Mammary epithelial cell (primary cell): ENCODE measurements at regions of chr20 and their contacts with region 1.

Region 1: DNA sequence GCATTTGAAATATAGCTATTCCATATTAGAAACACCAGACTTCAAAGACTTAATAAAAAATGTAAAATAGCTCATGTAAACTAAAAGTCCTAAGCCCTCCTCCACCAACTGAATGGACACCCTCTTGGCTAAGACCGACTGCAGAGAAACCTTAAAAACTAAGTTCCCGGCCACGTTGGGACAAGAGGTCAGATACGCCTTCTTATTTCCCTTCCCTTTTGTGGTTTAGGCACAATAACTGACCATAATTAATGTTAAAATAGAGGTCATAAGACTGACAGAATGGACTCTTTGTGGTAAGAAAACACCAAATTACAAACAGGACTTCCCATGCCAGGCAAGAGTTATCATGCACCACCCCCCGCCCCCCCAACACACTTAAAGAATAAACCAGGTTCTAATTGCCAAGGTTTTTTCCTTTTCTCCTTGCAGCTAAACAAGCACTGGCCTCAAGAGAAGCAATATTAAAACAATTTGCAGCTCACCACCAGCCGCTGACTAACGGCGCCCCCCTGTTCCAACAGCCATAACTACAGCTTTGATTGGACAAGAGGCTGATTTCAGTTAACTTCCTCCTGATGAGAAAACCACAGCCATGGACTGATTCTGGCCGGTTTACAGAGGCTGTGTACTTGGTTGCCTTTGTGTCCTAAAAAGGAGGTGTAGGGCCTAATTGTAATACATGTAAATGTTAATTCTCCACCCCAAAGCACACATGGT is 10.7 kb upstream of the LAMP5 start:
- DNase-seq: no peak
- H3K4me3 ChIP-seq: no peak overlapping the region
- H3K27ac ChIP-seq: no peak overlapping the region
- H3K4me1 ChIP-seq: peaks cover 8% of the 10 kb centered on the region
- H3K27me3 ChIP-seq: peaks cover 20% of the 10 kb centered on the region
- CTCF ChIP-seq: no peak

Region 2: DNA sequence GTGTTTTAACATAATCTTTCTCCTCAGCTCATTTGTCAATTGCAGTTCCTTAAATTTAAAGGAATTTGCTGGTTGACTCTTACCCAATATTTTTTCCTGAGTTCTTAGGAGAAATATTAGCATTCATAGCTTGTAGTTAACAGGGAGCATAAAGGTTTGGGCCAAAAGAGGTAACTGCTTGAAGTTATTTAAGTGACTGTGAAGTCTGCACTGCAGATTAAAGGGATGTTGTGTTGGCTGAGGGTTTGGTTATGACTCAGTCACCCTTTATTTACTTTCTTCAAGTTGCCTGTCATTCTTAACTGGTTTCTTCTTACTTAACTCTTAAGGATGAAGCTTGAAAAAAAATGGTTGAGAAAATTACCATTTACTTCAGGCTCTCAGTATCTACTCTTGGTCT is 209.6 kb before region 1 on chr20:
- CTCF ChIA-PET with region 1: no interaction called
- dilution Hi-C with region 1: no loop called
- in situ Hi-C with region 1: no loop called
- intact Hi-C with region 1: no loop called
- DNase-seq: peak; percentile 24
- H3K4me3 ChIP-seq: no peak overlapping the region
- H3K27ac ChIP-seq: no peak overlapping the region
- H3K4me1 ChIP-seq: no peaks in the 10 kb centered on the region
- H3K27me3 ChIP-seq: no peaks in the 10 kb centered on the region
- CTCF ChIP-seq: no peak

Region 3: DNA sequence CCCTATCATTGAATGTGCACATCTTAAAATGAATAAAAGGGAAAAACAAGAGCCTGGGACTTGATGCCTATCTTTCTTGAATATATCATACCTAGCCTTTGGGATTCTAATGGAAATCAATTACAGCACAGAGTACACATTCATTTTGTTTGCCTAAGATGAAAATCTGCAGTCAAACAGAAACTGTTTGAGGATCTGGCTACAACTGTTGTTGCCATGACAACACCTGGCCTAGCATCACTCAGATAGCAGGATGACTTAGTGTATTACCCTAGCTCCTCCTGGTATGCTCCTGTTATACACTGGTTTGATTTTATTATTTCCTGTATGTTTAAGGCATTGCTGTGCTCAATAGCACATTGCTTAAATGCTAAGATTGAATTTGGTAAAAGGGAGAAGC is 60.8 kb before region 1 on chr20:
- CTCF ChIA-PET with region 1: no interaction called
- dilution Hi-C with region 1: loop called (anchors 10 kb)
- in situ Hi-C with region 1: no loop called
- intact Hi-C with region 1: no loop called
- DNase-seq: peak; percentile 7
- H3K4me3 ChIP-seq: no peak overlapping the region
- H3K27ac ChIP-seq: no peak overlapping the region
- H3K4me1 ChIP-seq: peaks cover 7% of the 10 kb centered on the region
- H3K27me3 ChIP-seq: no peaks in the 10 kb centered on the region
- CTCF ChIP-seq: no peak